ENCODE measurements at regions of chr12 and their contacts with region 1.

Region 1: DNA sequence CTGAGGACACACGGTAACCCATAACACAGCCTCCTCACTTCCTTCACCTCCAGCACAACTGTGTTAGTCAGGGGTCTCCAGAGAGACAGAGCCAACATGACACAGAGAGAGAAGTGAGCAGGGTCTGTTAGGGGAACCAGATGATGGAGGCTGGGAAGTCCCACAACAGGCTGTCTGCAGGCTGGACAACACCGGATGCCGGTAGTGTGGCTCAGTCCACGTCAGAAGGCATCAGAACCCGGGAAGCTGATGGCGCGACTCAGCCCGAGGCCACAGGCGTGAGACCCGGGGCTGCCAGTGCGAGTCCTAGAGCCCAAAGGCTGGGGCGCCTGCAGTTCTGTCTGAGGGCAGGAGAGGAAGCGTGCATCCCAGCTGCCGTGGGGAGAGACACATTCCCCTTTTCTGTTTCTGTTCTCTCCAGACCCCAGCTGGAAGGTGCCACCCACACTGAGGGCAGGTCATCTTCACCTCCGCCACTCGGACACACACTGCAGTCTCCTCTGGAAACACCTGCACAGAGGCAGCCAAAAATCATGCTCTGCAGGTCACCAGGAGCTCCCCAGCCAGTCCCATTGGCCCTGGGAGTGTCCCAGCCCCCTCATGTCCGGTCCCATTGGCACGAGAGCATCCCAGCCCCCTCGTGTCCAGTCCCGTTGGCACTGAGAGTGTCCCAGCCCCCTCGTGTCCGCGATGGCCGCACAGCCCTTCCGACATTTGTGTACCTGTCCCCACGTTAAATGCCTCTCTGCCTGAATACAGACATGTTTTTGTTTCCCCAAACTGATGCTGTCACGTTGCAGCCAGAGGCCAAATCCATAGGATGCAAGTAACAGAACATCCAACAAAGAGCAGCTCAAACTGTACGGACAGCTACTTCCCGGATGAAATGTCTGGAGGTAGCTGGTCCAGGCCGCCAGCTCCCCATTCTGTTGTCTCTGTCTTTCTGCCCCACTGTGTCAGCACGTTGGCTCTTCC is 7.9 kb upstream of the FBRSL1 start:
- DNase-seq: no peak
- H3K4me3 ChIP-seq: no peak overlapping the region
- H3K27ac ChIP-seq: no peak overlapping the region
- H3K4me1 ChIP-seq: no peaks in the 10 kb centered on the region
- H3K27me3 ChIP-seq: no peaks in the 10 kb centered on the region
- CTCF ChIP-seq: no peak

Region 2: GRCh38 chr12:132400011-132400641 is 81.9 kb before region 1 on chr12:
- CTCF ChIA-PET with region 1: no interaction called
- dilution Hi-C with region 1: loop called (anchors 5 kb)
- in situ Hi-C with region 1: no loop called
- intact Hi-C with region 1: no loop called
- DNase-seq: no peak
- H3K4me3 ChIP-seq: no peak overlapping the region
- H3K27ac ChIP-seq: no peak overlapping the region
- H3K4me1 ChIP-seq: no peaks in the 10 kb centered on the region
- H3K27me3 ChIP-seq: peaks cover 32% of the 10 kb centered on the region
- CTCF ChIP-seq: no peak

Region 3: GRCh38 chr12:132445884-132446632 is 36.0 kb before region 1 on chr12:
- CTCF ChIA-PET with region 1: no interaction called
- dilution Hi-C with region 1: no loop called
- in situ Hi-C with region 1: no loop called
- intact Hi-C with region 1: no loop called
- DNase-seq: no peak
- H3K4me3 ChIP-seq: peak overlapping the region; percentile 4 to 45 (median 38)
- H3K27ac ChIP-seq: peak overlapping the region; percentile 30
- H3K4me1 ChIP-seq: peaks cover 3% of the 10 kb centered on the region
- H3K27me3 ChIP-seq: no peaks in the 10 kb centered on the region
- CTCF ChIP-seq: no peak

Region 4: DNA sequence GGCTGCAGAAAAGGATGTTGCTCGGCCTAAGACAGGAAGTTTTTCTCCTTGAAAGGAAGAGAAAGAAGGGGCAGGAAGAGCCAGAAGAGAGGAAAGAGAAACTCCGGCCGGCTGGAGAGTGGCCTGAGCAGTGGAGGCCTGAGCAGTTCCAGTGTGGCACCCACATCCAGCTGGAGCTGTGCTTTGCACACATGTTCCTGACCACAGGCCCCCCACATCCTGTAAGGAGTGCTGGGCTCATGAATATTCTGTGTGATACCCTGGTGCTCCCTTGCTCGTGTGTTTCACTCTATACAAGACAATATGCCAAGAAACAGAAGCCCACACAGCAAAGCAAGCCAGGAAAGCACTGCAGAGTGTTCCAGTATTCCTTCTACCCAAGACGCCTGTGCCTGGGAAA is 178.0 kb after region 1 on chr12:
- CTCF ChIA-PET with region 1: no interaction called
- dilution Hi-C with region 1: no loop called
- in situ Hi-C with region 1: no loop called
- intact Hi-C with region 1: no loop called
- DNase-seq: no peak
- H3K4me3 ChIP-seq: no peak overlapping the region
- H3K27ac ChIP-seq: no peak overlapping the region
- H3K4me1 ChIP-seq: no peaks in the 10 kb centered on the region
- H3K27me3 ChIP-seq: no peaks in the 10 kb centered on the region
- CTCF ChIP-seq: no peak